Head of caudate nucleus (tissue), 42 donors: ENCODE measurements at regions of chr17 and their contacts with region 1.

Region 1: DNA sequence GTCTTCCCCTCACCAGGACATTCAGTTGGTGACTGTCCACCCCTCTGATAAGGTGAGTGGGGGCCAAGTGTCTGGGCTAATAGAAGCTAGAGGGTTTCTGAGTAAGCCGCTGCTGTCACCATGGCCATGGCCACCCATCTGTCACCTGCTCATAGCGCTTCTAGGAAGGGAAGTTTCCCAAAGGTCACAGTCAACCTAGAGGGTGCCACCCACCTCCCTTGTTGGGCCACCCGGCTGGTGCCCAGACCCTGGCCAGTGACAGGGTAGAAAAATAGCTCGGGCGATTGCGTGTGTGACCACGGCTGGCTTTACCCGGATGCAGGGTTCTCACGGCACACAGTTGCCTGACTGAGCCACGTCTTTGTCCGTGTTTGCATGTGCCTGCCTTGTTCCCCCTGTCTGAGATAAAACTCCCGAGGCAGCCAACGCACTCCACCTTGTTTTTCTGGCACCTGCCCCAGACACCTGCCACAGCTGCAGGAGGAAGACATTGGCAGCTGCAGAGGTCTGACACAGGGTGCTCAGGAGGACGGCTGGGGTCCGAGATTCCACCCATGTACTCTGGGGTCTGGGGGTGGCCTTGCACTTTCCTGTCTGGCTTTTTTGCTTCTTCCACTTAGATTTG is 809 bp downstream of the PIRT start:
- DNase-seq: no peak

Region 2: DNA sequence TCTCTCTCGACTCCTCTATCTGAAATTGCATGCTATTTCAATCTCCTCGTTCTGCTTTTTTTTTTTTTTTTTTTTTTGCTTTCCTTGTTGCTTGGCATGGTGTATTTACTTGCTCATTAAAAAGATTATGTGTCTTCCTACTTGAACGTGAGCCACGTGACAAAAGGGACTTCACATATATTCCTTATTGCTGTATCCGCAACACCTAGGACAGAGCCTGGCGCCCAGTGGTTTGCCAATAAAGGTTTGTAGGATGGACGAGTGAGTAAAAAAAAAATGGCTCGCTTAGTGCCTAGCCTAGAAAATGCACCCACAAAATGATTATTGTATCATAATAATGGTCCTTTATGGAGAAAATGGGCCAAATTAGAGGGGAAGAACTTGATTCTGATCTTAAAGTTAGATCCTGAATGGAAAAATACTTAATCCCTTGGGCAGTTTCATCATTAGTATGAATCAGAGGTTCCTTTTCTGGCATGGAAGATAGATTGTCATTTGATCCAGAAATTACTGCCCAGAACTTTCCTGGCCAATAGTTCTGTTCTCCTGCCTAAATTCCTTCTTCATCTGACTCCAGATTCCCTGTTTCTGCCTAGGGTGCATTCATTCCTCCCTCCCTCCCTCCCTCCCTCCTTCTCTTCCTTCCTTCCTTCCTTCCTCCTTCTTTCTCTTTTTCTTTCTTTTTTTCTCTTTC is 93.6 kb before region 1 on chr17:
- intact Hi-C with region 1: loop called (anchors 2 kb)
- DNase-seq: no peak

Region 3: GRCh38 chr17:10772425-10773380 is 64.4 kb before region 1 on chr17:
- intact Hi-C with region 1: no loop called
- DNase-seq: peak in 5 of 42 donors; percentile 6 to 24 (median 19)